GM10248 (cell line): ENCODE measurements at regions of chr5 and their contacts with region 1.

Region 1: DNA sequence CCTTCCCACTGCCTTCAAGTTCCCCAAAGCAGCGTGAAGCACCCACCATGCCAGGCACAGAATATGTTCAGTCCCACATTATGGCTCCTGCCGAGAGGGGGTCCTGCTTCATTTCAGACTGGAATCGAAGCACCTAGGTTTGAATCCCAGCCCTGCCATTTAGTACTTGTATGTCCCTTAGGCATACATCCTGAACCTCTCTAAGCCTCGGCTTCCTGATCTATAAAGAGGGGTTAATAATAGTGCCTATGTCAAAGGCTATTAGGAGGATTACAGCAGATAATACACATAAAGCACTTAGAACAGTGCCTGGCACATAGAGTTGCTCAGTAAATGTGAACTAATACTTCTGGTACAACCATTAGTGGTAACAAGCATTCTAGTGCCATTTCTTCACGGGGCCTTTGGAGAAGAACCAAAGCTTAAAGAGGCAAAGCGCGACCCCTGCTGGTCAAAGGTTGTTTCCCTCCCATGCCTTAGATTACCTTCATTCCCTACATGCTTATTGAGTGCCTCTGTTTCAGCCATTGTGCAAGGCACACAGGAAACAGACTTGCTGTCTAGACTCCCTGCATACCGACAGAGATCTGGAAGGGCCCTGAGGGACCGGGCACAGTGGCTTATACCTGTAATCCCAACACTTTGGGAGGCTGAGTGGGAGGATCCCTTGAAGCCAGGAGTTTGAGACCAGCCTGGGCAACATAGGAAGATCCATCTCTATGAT is 98.2 kb downstream of the PPARGC1B start:
- DNase-seq: peak; percentile 84
- CTCF ChIP-seq: peak; percentile 82

Region 2: DNA sequence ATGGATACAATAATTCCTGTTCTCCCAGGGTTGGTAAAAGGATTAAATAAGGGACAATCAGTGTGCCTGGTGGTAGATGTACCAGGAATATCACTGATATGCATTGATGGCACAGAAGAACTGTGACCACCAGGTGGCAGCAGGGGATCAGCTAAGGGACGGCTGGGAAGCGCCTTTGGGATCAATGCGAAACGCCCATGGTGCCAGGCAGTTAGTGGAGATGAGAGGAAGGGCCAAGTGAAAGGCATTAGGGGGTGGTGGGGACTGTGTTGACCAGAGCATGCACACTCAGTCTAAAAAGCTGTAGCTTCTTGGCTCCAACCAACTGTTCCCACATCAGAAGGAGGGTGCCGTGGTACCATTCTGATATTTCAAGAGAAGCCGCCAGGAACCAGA is 191.5 kb before region 1 on chr5:
- CTCF ChIA-PET with region 1: interaction called, 297 read pairs
- POLR2A ChIA-PET with region 1: interaction called, 9 read pairs
- DNase-seq: peak; percentile 73
- CTCF ChIP-seq: peak; percentile 89